ENCODE measurements at regions of chr2 and their contacts with region 1.

Region 1: DNA sequence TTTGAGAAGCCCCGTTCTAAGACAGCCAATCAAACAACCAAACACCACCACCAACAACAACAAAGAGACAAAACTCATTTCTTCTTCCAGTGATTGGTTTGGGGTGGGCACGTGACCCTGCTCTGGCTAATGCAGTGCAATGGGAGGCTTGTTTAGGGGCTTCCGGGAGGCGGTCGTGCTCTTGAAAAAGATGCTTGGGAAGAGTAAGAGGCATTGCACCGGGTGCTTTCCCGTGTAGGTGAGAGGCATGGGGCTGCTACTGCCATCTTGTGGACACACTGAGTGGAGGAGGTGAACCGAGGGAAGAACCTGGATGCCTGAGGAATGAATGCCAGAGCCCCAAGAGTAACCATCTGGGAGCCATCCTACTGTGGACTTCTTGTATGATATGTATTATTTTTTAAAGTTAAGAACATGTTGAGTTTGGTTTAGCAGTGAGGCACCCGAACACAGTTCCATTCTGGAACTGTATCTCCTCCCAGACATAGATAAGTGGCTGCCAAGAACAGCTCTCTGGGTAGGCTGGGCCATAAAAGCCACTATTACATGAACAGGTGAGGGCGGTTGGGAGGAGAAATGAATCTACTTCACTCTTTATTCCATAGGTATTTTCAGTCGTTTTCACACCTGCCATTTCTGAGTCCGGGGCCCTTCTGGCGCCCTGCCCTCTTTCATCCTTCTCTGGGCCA is 19.1 kb upstream of the ARHGAP25 start:
- DNase-seq: no peak
- CTCF ChIP-seq: peak; percentile 70

Region 2: DNA sequence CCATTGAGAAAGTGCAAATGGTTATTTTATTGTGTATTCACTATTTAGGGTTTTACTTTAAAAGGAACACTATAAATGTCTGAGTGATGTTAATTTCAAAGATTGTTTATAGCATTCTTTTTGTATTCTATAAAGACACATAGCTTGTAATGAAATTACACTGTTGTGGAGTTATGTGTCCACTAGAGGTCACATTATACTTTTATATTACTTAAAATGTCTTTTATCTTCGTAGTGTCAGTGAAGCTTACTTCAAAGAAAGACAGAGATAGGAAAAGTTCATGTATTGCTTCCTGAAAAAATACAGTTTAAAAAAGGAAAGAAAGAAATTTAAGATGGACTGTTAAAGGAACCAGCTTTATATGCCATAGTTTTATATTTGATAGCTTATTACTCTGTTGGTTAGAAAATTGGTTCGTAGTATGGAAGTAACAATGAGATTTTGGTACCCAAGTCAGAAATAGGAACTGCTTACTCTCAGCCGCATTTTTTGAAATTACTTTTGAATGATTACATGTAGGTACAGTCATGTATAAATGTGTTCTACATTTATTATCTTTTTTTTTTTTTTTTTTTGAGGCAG is 227.6 kb before region 1 on chr2:
- in situ Hi-C with region 1: loop called (anchors 25 kb)
- DNase-seq: peak; percentile 36
- CTCF ChIP-seq: peak; percentile 36

Measured in GM13977 (cell line).